HCT116 (cell line): ENCODE measurements at regions of chr6 and their contacts with region 1.

Region 1: GRCh38 chr6:31971993-31972708 is at the start of gene DXO:
- DNase-seq: peak; percentile 98
- ATAC-seq: peak; percentile 91
- H3K4me3 ChIP-seq: peak within 1 kb of the TSS; percentile 70 to 93
- H3K27ac ChIP-seq: peak within 1 kb of the TSS; percentile 86
- H3K4me1 ChIP-seq: peaks cover 7 to 25% of the 10 kb centered on the region in 2 experiments; a peak in 3 of 4 replicates
- H3K27me3 ChIP-seq: no peaks in the 10 kb centered on the region
- CTCF ChIP-seq: no peak
- POLR2A ChIP-seq: no peak
- RAD21 ChIP-seq: no peak
- total RNA-seq, gene DXO: 16.4 TPM

Region 2: GRCh38 chr6:31888276-31889258 is 83.6 kb before region 1 on chr6:
- CTCF ChIA-PET with region 1: no interaction called
- POLR2A ChIA-PET with region 1: no interaction called
- RAD21 ChIA-PET with region 1: no interaction called
- intact Hi-C with region 1: no loop called
- DNase-seq: no peak
- ATAC-seq: peak; percentile 66
- H3K4me3 ChIP-seq: no peak overlapping the region
- H3K27ac ChIP-seq: no peak overlapping the region
- H3K4me1 ChIP-seq: no peaks in the 10 kb centered on the region
- H3K27me3 ChIP-seq: no peaks in the 10 kb centered on the region
- CTCF ChIP-seq: peak; percentile 49 to 92 (median 82); a peak in 5 of 6 replicates
- POLR2A ChIP-seq: no peak
- RAD21 ChIP-seq: peak; percentile 64

Region 3: GRCh38 chr6:31958741-31959739 is 13.1 kb before region 1 on chr6 and contains the starts of genes NELFE and SKIC2:
- CTCF ChIA-PET with region 1: no interaction called
- POLR2A ChIA-PET with region 1: interaction called, 9 read pairs
- RAD21 ChIA-PET with region 1: interaction called in 1 of 2 experiments, 4 read pairs
- intact Hi-C with region 1: loop called (anchors 1 kb)
- DNase-seq: peak; percentile 95
- ATAC-seq: peak; percentile 98
- H3K4me3 ChIP-seq: peak within 1 kb of the TSS; percentile 95 to 100
- H3K27ac ChIP-seq: peak within 1 kb of the TSS; percentile 76
- H3K4me1 ChIP-seq: peaks cover 14 to 17% of the 10 kb centered on the region in 2 experiments
- H3K27me3 ChIP-seq: no peaks in the 10 kb centered on the region
- CTCF ChIP-seq: no peak
- POLR2A ChIP-seq: peak; percentile 50
- RAD21 ChIP-seq: no peak
- total RNA-seq, gene NELFE: 68.3 TPM
- total RNA-seq, gene SKIC2: 68.0 TPM